ENCODE measurements at regions of chr7 and their contacts with region 1.

Region 1: GRCh38 chr7:147779949-147780348 is 810.6 kb upstream of the C7orf33 start:
- DNase-seq: no peak

Region 2: GRCh38 chr7:147321504-147321903 is 458.4 kb before region 1 on chr7:
- intact Hi-C with region 1: no loop called
- DNase-seq: no peak

Region 3: DNA sequence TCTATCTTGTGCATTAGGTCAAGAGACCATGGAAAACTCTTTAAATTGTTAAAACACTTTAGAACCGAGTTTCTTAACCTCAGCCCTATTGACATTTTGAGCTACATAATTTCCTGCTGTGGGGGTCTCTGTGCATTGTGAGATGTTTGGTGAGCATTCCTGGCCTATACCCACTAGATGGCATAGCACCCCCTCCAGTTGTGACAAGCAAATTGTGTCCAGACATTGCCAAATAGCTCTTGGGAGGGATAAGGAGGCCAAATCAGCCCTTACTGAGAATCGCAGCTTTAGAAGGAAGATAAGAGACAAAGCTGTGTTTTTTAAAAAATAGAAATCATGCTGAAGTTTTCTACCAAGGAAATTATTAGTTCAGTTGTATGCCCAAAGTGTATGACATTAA is 347.9 kb before region 1 on chr7:
- intact Hi-C with region 1: loop called (anchors 5 kb)
- DNase-seq: peak in 6 of 10 donors; percentile 9 to 83 (median 27)